CD14-positive monocyte (primary cell): ENCODE measurements at regions of chr7 and their contacts with region 1.

Region 1: DNA sequence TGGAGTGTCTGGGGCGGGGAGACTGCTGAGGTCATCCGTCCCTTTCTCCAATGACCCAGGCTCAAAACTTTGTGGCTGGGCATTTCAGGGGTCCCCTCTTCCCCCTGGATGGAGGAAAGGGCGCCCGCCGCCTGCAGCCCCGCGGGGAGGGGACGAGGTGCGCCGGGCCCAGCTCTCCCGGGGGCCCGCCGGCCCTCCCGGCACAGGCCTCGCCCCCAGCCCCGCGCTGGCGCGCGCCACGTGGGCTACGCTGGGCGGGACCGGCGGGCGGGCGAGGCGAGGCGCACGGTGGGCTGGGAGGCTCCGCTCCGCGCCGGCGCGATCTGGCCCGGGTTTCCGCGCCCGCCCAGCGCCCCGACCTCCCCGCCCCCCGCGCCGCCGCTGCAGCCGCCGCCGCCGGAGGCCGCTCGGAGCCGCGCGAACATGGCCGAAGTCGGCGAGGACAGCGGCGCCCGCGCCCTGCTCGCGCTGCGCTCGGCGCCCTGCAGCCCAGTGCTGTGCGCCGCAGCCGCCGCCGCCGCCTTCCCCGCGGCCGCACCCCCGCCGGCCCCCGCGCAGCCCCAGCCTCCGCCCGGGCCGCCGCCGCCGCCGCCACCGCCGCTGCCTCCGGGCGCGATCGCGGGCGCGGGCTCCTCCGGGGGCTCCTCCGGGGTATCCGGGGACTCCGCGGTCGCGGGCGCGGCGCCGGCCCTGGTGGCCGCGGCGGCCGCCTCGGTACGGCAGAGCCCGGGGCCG is at the start of gene FOXK1:
- DNase-seq: peak; percentile 49 to 62 (median 59)
- H3K4me3 ChIP-seq: peak within 1 kb of the TSS; percentile 83 to 84 (median 83)
- H3K4me3 Mint-ChIP-seq: peak within 1 kb of the TSS; percentile 86 to 87
- H3K27ac ChIP-seq: peak within 1 kb of the TSS; percentile 77 to 83
- H3K27ac Mint-ChIP-seq: peak within 1 kb of the TSS; percentile 82 to 97 (median 91)
- H3K4me1 ChIP-seq: peaks cover 27 to 29% of the 10 kb centered on the region in 2 donors
- H3K4me1 Mint-ChIP-seq: peaks cover 38% of the 10 kb centered on the region
- H3K27me3 ChIP-seq: no peaks in the 10 kb centered on the region
- H3K27me3 Mint-ChIP-seq: peaks cover 0 to 4% (median 0%) of the 10 kb centered on the region in 3 donors
- CTCF ChIP-seq: no peak
- polyA plus RNA-seq, gene FOXK1: 0.33 to 16.8 (median 0.76) TPM

Region 2: GRCh38 chr7:4725014-4725849 is 43.2 kb after region 1 on chr7:
- intact Hi-C with region 1: loop called (anchors 5 kb)
- DNase-seq: peak; percentile 71 to 80 (median 73)
- H3K4me3 ChIP-seq: peak overlapping the region; percentile 53 to 74 (median 69)
- H3K4me3 Mint-ChIP-seq: peak overlapping the region; percentile 96
- H3K27ac ChIP-seq: peak overlapping the region; percentile 87 to 88
- H3K27ac Mint-ChIP-seq: peak overlapping the region; percentile 93 to 98 (median 97)
- H3K4me1 ChIP-seq: peaks cover 29 to 49% of the 10 kb centered on the region in 2 donors
- H3K4me1 Mint-ChIP-seq: peaks cover 44% of the 10 kb centered on the region
- H3K27me3 ChIP-seq: no peaks in the 10 kb centered on the region
- H3K27me3 Mint-ChIP-seq: no peaks in the 10 kb centered on the region
- CTCF ChIP-seq: no peak

Region 3: GRCh38 chr7:4744391-4745264 is 62.6 kb after region 1 on chr7:
- intact Hi-C with region 1: loop called in 1 of 2 experiments (anchors 5 kb)
- DNase-seq: peak; percentile 41 to 58 (median 50)
- H3K4me3 ChIP-seq: peak overlapping the region; percentile 40 to 77 (median 62)
- H3K4me3 Mint-ChIP-seq: peak overlapping the region; percentile 76 to 88
- H3K27ac ChIP-seq: peak overlapping the region; percentile 77 to 95
- H3K27ac Mint-ChIP-seq: peak overlapping the region; percentile 93 to 97 (median 97)
- H3K4me1 ChIP-seq: peaks cover 40 to 43% of the 10 kb centered on the region in 2 donors
- H3K4me1 Mint-ChIP-seq: peaks cover 44% of the 10 kb centered on the region
- H3K27me3 ChIP-seq: no peaks in the 10 kb centered on the region
- H3K27me3 Mint-ChIP-seq: peaks cover 0 to 2% (median 0%) of the 10 kb centered on the region in 3 donors
- CTCF ChIP-seq: no peak

Region 4: GRCh38 chr7:4753711-4754432 is 71.8 kb after region 1 on chr7:
- intact Hi-C with region 1: loop called (anchors 5 kb)
- DNase-seq: peak; percentile 62 to 72 (median 65)
- H3K4me3 ChIP-seq: no peak overlapping the region
- H3K4me3 Mint-ChIP-seq: no peak overlapping the region
- H3K27ac ChIP-seq: no peak overlapping the region
- H3K27ac Mint-ChIP-seq: peak overlapping the region in 1 of 7 donors; percentile 63
- H3K4me1 ChIP-seq: no peaks in the 10 kb centered on the region
- H3K4me1 Mint-ChIP-seq: peaks cover 5% of the 10 kb centered on the region
- H3K27me3 ChIP-seq: no peaks in the 10 kb centered on the region
- H3K27me3 Mint-ChIP-seq: peaks cover 0 to 1% (median 0%) of the 10 kb centered on the region in 3 donors
- CTCF ChIP-seq: peak; percentile 96